ENCODE measurements at regions of chr18 and their contacts with region 1.

Region 1: DNA sequence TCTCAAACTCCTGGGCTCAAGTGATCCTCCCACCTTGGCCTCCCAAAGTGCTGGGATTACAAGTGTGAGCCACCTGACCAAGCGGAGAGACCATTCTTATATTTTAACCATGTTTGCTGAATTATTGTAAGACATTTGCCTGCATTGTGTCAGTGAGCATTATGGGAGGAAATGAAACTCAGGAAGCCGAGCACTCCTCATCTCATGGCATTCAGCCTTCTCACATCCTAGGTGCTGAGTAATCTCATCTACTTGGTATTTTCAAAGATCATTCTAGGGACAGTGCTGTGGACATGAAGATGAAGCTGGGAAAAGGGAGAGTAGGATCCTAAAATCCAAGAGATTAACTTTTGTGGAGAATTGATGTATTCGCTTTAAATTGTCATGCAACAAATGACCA is 66.1 kb downstream of the NAPG start:
- DNase-seq: no peak
- H3K4me3 ChIP-seq: no peak overlapping the region
- H3K27ac ChIP-seq: no peak overlapping the region
- H3K4me1 ChIP-seq: no peaks in the 10 kb centered on the region
- H3K27me3 ChIP-seq: no peaks in the 10 kb centered on the region
- CTCF ChIP-seq: no peak
- EP300 ChIP-seq: no peak
- POLR2A ChIP-seq: no peak

Region 2: DNA sequence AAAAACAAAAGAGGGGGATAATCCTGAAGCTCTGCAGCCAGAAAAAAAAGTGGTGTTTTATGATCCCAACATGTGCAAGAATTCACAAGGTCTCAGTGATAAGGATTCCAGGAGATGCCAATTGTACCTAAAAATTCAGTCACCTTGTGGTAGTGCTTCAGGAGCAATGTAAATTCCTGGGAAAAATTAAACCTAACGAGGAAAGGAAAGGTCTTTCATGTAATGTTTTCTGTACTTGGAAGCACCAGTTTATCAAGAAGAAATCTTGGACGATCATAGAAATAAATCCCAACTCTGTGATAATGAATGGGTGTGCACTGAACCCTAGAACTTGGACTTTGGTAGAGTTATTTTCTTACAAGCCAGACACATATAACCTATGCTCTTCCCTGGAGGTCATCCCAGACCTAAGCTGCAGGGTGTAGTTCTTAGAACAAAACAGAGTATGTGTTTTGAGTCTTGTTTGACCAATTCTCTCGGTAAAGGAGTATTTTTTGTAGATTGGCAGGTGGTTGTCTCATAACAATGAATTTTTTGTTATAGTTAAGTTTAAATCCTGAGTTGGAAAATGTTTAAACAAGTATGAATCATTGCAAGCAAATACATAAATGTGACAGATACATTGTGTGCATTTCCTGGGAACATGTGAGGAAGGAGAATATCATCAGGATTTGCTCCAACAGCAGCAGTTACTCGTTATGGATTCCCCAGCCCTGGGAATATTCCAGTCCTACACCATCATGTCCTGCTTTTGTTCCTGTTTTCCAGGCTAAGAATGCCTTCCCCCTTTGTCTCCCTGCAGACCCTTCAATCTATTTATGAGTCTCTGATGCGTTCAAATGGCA is 158.5 kb after region 1 on chr18:
- in situ Hi-C with region 1: no loop called
- intact Hi-C with region 1: no loop called
- DNase-seq: no peak
- H3K4me3 ChIP-seq: no peak overlapping the region
- H3K27ac ChIP-seq: no peak overlapping the region
- H3K4me1 ChIP-seq: no peaks in the 10 kb centered on the region
- H3K27me3 ChIP-seq: no peaks in the 10 kb centered on the region
- CTCF ChIP-seq: no peak
- EP300 ChIP-seq: no peak
- POLR2A ChIP-seq: no peak

Region 3: DNA sequence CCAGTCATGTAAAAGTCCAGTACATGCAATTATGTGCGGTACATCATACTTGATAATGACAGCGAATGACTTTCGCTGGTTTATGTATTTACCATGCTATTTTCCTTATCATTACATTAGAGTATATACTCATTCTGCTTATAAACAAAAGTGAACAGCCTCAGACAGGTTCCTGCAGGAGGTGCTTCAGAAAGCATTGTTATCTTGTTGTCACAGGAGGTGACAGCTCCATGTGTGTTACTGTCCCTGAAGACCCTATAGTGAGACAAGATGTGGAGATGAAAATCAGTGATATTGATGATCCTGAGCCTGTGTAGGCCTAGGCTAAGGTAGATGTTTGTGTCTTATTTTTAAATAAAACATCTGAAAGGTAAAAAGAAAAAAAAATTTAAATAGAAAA is 1331.6 kb after region 1 on chr18:
- in situ Hi-C with region 1: loop called in 1 of 4 experiments (anchors 5 kb)
- intact Hi-C with region 1: no loop called
- DNase-seq: no peak
- H3K4me3 ChIP-seq: no peak overlapping the region
- H3K27ac ChIP-seq: no peak overlapping the region
- H3K4me1 ChIP-seq: peaks cover 0 to 5% (median 2%) of the 10 kb centered on the region in 4 donors
- H3K27me3 ChIP-seq: no peaks in the 10 kb centered on the region
- CTCF ChIP-seq: no peak
- EP300 ChIP-seq: no peak
- POLR2A ChIP-seq: no peak

Measured in transverse colon (tissue), 4 donors.